CD14-positive monocyte (primary cell): ENCODE measurements at regions of chr16 and their contacts with region 1.

Region 1: GRCh38 chr16:87853411-87854052 is 15.8 kb downstream of the SLC7A5 start:
- DNase-seq: peak; percentile 93 to 98 (median 97)
- H3K4me3 ChIP-seq: peak overlapping the region in 1 of 3 experiments; percentile 70
- H3K4me3 Mint-ChIP-seq: peak overlapping the region; percentile 61 to 63
- H3K27ac ChIP-seq: peak overlapping the region; percentile 48 to 78
- H3K27ac Mint-ChIP-seq: peak overlapping the region; percentile 73 to 92 (median 80)
- H3K4me1 ChIP-seq: peaks cover 40 to 49% of the 10 kb centered on the region in 2 donors
- H3K4me1 Mint-ChIP-seq: peaks cover 42% of the 10 kb centered on the region
- H3K27me3 ChIP-seq: no peaks in the 10 kb centered on the region
- H3K27me3 Mint-ChIP-seq: peaks cover 3 to 8% (median 4%) of the 10 kb centered on the region in 3 donors
- CTCF ChIP-seq: no peak

Region 2: DNA sequence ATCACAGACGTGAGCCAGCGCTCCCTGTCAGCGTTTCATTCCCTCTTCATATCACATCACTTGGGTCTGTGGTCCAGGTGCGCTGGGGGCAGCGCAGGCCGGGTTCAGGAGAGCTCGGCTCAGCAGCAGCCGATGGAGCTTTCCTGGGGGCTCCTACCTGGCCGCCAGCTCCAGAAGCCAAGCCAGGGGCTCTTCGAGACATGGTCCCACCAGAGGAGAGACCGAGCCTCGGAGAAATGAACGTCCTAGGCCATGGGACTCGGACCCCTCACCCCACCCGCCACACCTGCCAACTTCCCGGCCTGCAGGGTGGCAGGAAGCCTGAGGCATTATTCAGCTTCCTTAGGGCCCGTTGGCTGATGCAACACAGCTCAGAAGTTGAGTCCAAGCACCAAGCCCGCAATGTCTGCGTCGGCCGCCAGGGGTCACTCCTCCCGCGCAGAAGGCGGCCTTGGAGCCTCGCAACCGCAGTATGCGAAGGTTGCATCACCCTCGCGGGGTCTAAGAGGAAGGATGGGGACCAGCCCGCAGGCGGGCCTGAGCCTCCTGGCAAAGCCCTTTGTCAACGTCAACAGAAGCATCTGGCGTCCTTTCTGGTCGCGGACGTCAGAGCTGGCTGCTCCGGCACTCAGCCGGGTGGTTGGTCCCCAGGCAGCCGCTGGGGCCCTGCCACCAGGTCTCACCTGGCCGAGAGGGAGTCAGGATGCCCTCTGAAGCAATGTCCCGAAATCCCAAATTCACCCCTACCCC is 74.5 kb before region 1 on chr16:
- intact Hi-C with region 1: loop called in 1 of 2 experiments (anchors 5 kb)
- DNase-seq: peak; percentile 97 to 98 (median 97)
- H3K4me3 ChIP-seq: peak overlapping the region in 1 of 3 experiments; percentile 30
- H3K4me3 Mint-ChIP-seq: peak overlapping the region; percentile 45 to 68
- H3K27ac ChIP-seq: peak overlapping the region; percentile 16 to 68
- H3K27ac Mint-ChIP-seq: peak overlapping the region; percentile 86 to 95 (median 90)
- H3K4me1 ChIP-seq: peaks cover 40 to 44% of the 10 kb centered on the region in 2 donors
- H3K4me1 Mint-ChIP-seq: peaks cover 40% of the 10 kb centered on the region
- H3K27me3 ChIP-seq: no peaks in the 10 kb centered on the region
- H3K27me3 Mint-ChIP-seq: peaks cover 0 to 16% (median 2%) of the 10 kb centered on the region in 3 donors
- CTCF ChIP-seq: peak; percentile 96

Region 3: GRCh38 chr16:87874639-87875465 is 21.3 kb after region 1 on chr16:
- intact Hi-C with region 1: loop called (anchors 1 to 2 kb)
- DNase-seq: no peak
- H3K4me3 ChIP-seq: no peak overlapping the region
- H3K4me3 Mint-ChIP-seq: no peak overlapping the region
- H3K27ac ChIP-seq: no peak overlapping the region
- H3K27ac Mint-ChIP-seq: peak overlapping the region in 1 of 7 donors; percentile 50
- H3K4me1 ChIP-seq: peaks cover 17 to 18% of the 10 kb centered on the region in 2 donors
- H3K4me1 Mint-ChIP-seq: peaks cover 17% of the 10 kb centered on the region
- H3K27me3 ChIP-seq: no peaks in the 10 kb centered on the region
- H3K27me3 Mint-ChIP-seq: peaks cover 0 to 8% (median 3%) of the 10 kb centered on the region in 3 donors
- CTCF ChIP-seq: no peak

Region 4: GRCh38 chr16:88005181-88005581 is 151.6 kb after region 1 on chr16:
- intact Hi-C with region 1: loop called in 1 of 2 experiments (anchors 10 kb)
- DNase-seq: peak; percentile 76 to 81 (median 80)
- H3K4me3 ChIP-seq: no peak overlapping the region
- H3K4me3 Mint-ChIP-seq: no peak overlapping the region
- H3K27ac ChIP-seq: peak overlapping the region in 1 of 2 donors; percentile 66
- H3K27ac Mint-ChIP-seq: peak overlapping the region; percentile 75 to 89 (median 82)
- H3K4me1 ChIP-seq: peaks cover 13 to 18% of the 10 kb centered on the region in 2 donors
- H3K4me1 Mint-ChIP-seq: peaks cover 20% of the 10 kb centered on the region
- H3K27me3 ChIP-seq: no peaks in the 10 kb centered on the region
- H3K27me3 Mint-ChIP-seq: peaks cover 0 to 4% (median 0%) of the 10 kb centered on the region in 3 donors
- CTCF ChIP-seq: peak; percentile 74